Activated CD4-positive, alpha-beta T cell treated with anti-CD3 and anti-CD28 coated beads for 36 hours (primary cell): ENCODE measurements at regions of chr15 and their contacts with region 1.

Region 1: GRCh38 chr15:35974052-35974451 is 428.1 kb upstream of the DPH6 start:
- DNase-seq: no peak
- ATAC-seq: no peak
- H3K4me3 Mint-ChIP-seq: no peak overlapping the region
- H3K27ac Mint-ChIP-seq: no peak overlapping the region
- H3K4me1 Mint-ChIP-seq: no peaks in the 10 kb centered on the region
- H3K27me3 Mint-ChIP-seq: no peaks in the 10 kb centered on the region

Region 2: DNA sequence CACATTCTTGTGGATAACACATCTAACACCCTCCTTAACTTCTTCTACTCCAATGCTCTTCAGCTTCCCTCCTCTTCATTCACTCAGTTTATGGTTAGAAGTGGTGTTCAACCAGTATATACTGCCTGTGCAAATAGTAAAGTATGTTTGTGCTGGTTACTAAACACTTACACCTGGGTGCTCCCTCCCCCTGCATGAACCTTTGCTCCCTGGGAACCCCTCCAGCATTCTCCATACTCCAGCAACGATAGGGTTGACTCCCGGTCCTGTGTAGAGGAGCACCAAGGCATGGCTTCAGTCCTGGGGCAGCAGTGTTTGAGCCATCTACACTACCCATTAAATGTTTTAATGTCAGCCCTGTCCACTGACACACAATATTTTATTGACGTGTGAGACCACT is 20.6 kb before region 1 on chr15:
- CTCF ChIA-PET with region 1: no interaction called
- POLR2A ChIA-PET with region 1: no interaction called
- intact Hi-C with region 1: loop called in 1 of 2 experiments (anchors 2 kb)
- DNase-seq: no peak
- ATAC-seq: no peak
- H3K4me3 Mint-ChIP-seq: no peak overlapping the region
- H3K27ac Mint-ChIP-seq: no peak overlapping the region
- H3K4me1 Mint-ChIP-seq: no peaks in the 10 kb centered on the region
- H3K27me3 Mint-ChIP-seq: peaks cover 2% of the 10 kb centered on the region